PC-9 (cell line): ENCODE measurements at regions of chr20 and their contacts with region 1.

Region 1: GRCh38 chr20:57153238-57153905 is 113.1 kb downstream of the BMP7 start:
- DNase-seq: no peak
- H3K4me3 ChIP-seq: no peak overlapping the region
- H3K27ac ChIP-seq: no peak overlapping the region
- H3K4me1 ChIP-seq: no peaks in the 10 kb centered on the region
- H3K27me3 ChIP-seq: peaks cover 30% of the 10 kb centered on the region
- CTCF ChIP-seq: no peak

Region 2: DNA sequence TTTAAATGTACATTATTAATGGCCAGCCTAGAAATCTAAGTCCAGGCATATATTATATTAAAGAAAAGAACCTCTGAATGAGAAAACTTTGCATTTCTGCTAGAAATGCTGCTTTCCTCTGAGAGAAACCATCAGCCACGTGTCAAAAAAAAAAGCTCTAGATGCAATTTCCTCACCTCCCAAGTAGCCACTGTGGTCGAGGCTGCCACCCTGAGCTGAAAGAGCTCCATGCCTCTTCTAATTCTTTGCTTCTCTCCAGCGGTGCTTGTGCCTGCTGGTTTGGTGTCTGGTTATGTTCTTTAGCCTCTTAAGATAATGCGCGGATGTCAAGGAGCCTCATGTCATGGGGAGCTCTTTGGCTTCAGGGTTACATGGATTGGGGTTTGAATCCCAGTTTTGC is 208.3 kb before region 1 on chr20:
- CTCF ChIA-PET with region 1: no interaction called
- POLR2A ChIA-PET with region 1: no interaction called
- intact Hi-C with region 1: no loop called
- DNase-seq: no peak
- H3K4me3 ChIP-seq: no peak overlapping the region
- H3K27ac ChIP-seq: no peak overlapping the region
- H3K4me1 ChIP-seq: no peaks in the 10 kb centered on the region
- H3K27me3 ChIP-seq: peaks cover 8% of the 10 kb centered on the region; the same call in 1 of the 2 replicates
- CTCF ChIP-seq: 0 out of 2 replicates have a peak, but pooled peaks have one; percentile 27

Region 3: GRCh38 chr20:57181662-57182061 is 28.3 kb after region 1 on chr20:
- CTCF ChIA-PET with region 1: no interaction called
- POLR2A ChIA-PET with region 1: interaction called, 17 read pairs
- intact Hi-C with region 1: no loop called
- DNase-seq: no peak
- H3K4me3 ChIP-seq: no peak overlapping the region
- H3K27ac ChIP-seq: no peak overlapping the region
- H3K4me1 ChIP-seq: no peaks in the 10 kb centered on the region
- H3K27me3 ChIP-seq: peaks cover 54% of the 10 kb centered on the region
- CTCF ChIP-seq: no peak